HCT116 (cell line): ENCODE measurements at regions of chr12 and their contacts with region 1.

Region 1: GRCh38 chr12:112900299-112901145 is 6.2 kb upstream of the OAS1 start:
- DNase-seq: peak; percentile 80
- ATAC-seq: peak; percentile 95
- H3K4me3 ChIP-seq: no peak overlapping the region
- H3K27ac ChIP-seq: no peak overlapping the region
- H3K4me1 ChIP-seq: no peaks in the 10 kb centered on the region
- H3K27me3 ChIP-seq: peaks cover 35% of the 10 kb centered on the region
- CTCF ChIP-seq: peak; percentile 69 to 82 (median 73); a peak in 5 of 6 replicates
- POLR2A ChIP-seq: no peak
- RAD21 ChIP-seq: peak; percentile 68

Region 2: DNA sequence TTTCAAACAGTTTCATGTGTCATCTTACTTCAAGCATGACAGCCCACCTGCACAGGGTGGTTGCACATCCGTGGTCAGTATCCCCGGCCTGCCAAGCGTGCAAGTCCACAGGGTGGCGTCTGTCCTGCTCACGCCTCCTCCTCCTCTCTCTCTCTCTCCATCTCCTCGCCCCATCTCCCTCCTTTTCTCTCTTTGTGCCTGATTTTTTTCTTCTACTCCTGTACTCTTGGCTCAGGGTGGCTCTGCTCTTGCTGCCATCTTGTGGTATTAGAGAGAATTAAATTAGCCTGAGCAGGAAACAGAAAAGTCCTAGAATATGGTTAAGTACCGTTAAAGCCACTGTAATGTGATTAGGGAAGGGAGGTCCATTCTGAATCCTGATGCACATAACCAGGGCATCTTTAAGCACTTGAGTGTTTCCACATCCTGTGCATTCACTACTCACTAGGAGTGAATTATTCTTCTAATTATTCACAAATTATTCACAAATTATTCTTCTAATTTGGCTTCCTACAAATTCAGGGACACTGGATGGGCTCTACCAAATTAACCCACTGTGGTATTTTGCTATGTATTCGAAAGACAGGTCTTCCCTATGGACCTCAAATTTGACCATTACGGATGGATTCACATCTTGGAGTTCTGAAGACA is 130.5 kb after region 1 on chr12:
- CTCF ChIA-PET with region 1: no interaction called
- POLR2A ChIA-PET with region 1: no interaction called
- RAD21 ChIA-PET with region 1: no interaction called
- intact Hi-C with region 1: loop called (anchors 1 kb)
- DNase-seq: peak; percentile 82
- ATAC-seq: peak; percentile 98
- H3K4me3 ChIP-seq: no peak overlapping the region
- H3K27ac ChIP-seq: no peak overlapping the region
- H3K4me1 ChIP-seq: peaks cover 0 to 5% of the 10 kb centered on the region in 2 experiments; a peak in 1 of 4 replicates
- H3K27me3 ChIP-seq: no peaks in the 10 kb centered on the region
- CTCF ChIP-seq: peak; percentile 73 to 97 (median 83)
- POLR2A ChIP-seq: no peak
- RAD21 ChIP-seq: peak; percentile 83